Transverse colon (tissue), 4 donors: ENCODE measurements at regions of chr6 and their contacts with region 1.

Region 1: GRCh38 chr6:2166717-2167116 is 78.7 kb downstream of the GMDS start:
- DNase-seq: peak; percentile 37
- H3K4me3 ChIP-seq: no peak overlapping the region
- H3K27ac ChIP-seq: peak overlapping the region in 2 of 4 donors; percentile 4 to 14
- H3K4me1 ChIP-seq: peaks cover 0 to 16% (median 5%) of the 10 kb centered on the region in 4 donors
- H3K27me3 ChIP-seq: no peaks in the 10 kb centered on the region
- CTCF ChIP-seq: no peak
- EP300 ChIP-seq: no peak
- POLR2A ChIP-seq: no peak

Region 2: DNA sequence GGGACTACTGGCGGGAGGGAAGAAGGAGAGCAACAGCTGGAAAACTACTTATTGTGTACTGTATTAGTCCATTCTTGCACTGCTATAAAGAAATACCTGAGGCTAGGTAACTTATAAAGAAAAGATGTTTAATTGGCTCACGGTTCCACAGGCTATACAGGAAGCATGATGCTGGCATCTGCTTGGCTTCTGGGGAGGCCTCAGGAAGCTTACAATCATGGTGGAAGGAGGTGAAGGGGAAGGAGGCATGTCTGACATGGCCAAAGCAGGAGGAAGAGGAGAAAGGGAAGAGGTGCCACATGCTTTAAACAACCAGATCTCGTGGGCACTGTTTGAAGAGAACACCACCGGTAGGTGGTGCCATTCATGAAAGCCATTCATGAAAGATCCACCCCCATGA is 11.4 kb after region 1 on chr6:
- in situ Hi-C with region 1: no loop called
- intact Hi-C with region 1: loop called (anchors 1 kb)
- DNase-seq: no peak
- H3K4me3 ChIP-seq: no peak overlapping the region
- H3K27ac ChIP-seq: no peak overlapping the region
- H3K4me1 ChIP-seq: peaks cover 0 to 7% (median 2%) of the 10 kb centered on the region in 4 donors
- H3K27me3 ChIP-seq: no peaks in the 10 kb centered on the region
- CTCF ChIP-seq: no peak
- EP300 ChIP-seq: no peak
- POLR2A ChIP-seq: no peak

Region 3: GRCh38 chr6:3341467-3341866 is 1174.8 kb after region 1 on chr6:
- in situ Hi-C with region 1: no loop called
- intact Hi-C with region 1: no loop called
- DNase-seq: no peak
- H3K4me3 ChIP-seq: no peak overlapping the region
- H3K27ac ChIP-seq: peak overlapping the region in 3 of 4 donors; percentile 12 to 38 (median 34)
- H3K4me1 ChIP-seq: peaks cover 9 to 44% (median 23%) of the 10 kb centered on the region in 4 donors
- H3K27me3 ChIP-seq: no peaks in the 10 kb centered on the region
- CTCF ChIP-seq: no peak
- EP300 ChIP-seq: no peak
- POLR2A ChIP-seq: no peak